ENCODE measurements at regions of chr18 and their contacts with region 1.

Region 1: GRCh38 chr18:59402432-59403090 is 43.5 kb upstream of the LMAN1 start:
- DNase-seq: peak; percentile 29
- H3K4me3 ChIP-seq: no peak overlapping the region
- H3K27ac ChIP-seq: no peak overlapping the region
- H3K27me3 ChIP-seq: no peaks in the 10 kb centered on the region
- CTCF ChIP-seq: peak; percentile 97

Region 2: DNA sequence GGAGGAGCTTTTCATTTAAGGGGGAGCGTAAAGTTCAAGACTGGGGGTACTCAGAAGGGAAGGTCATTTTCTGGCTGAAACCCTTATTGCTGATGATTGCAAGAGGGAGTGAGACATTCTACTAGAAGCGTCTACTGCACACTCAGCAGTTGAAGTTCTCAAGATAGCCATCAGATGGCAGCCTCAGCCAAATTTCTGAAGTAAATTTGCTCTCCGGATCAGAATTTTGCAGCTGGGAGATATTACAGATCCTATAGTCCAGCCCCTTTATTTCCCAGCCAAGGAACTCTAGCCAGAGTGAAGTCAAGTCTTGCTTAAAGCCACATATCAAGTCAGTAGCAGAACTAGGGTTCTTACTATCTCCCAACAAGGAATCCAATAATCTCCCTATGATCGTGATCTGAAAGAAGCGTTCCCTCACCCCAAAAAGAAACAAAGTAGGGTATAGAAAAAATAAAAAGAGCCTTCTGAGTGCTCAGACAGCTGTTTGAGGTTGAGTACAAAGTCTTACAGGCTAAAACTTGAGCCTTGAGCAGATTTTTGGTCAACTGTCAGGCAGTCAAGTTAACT is 153.3 kb before region 1 on chr18:
- CTCF ChIA-PET with region 1: interaction called, 189 read pairs
- POLR2A ChIA-PET with region 1: no interaction called
- DNase-seq: peak; percentile 65
- H3K4me3 ChIP-seq: no peak overlapping the region
- H3K27ac ChIP-seq: no peak overlapping the region
- H3K27me3 ChIP-seq: peaks cover 13% of the 10 kb centered on the region
- CTCF ChIP-seq: peak; percentile 88

Region 3: GRCh38 chr18:59353079-59353680 is 49.4 kb before region 1 on chr18:
- CTCF ChIA-PET with region 1: interaction called, 31 read pairs
- POLR2A ChIA-PET with region 1: no interaction called
- DNase-seq: no peak
- H3K4me3 ChIP-seq: no peak overlapping the region
- H3K27ac ChIP-seq: no peak overlapping the region
- H3K27me3 ChIP-seq: no peaks in the 10 kb centered on the region
- CTCF ChIP-seq: no peak

Region 4: DNA sequence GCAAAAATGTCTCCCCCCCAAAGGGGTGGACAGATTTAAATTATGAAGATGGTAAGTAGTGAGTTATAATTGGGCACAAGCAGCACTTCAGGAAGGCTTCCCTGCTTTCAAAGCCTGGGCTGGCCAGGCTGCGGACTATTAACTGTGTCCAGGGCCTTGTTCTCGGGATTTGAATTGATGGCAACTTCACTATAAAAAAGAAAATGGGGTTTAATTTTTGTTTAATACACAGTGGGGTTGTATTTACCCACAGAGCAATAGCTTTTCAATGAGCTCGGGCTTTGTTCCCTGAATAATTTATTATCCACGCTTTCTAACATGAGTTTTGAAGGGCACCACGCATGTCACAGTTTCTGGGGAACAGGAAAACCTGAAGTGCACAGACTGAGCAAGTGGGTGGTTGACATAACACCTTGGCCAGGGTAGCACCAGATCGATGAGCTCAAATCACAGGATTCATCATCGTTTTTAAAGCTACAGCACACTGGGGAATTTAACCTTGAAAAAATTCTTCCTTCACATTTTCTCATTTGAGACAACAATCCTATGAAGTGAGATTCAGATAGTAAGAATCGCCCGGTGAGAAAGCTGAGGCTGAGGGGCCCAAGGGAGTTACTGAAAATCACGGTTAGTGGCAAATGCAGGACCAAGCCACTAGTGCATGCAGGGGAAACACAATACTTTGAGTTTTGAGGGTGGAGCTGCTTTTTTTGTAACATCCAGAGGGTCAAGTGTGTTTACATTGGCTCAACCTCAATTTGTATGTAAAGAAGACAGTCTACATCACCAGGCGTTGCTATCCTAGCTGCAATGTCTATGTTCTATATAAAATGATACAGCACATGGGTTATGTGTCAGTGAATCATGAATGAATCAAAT is 14.6 kb before region 1 on chr18:
- CTCF ChIA-PET with region 1: interaction called, 23 read pairs
- POLR2A ChIA-PET with region 1: no interaction called
- DNase-seq: no peak
- H3K4me3 ChIP-seq: no peak overlapping the region
- H3K27ac ChIP-seq: no peak overlapping the region
- H3K27me3 ChIP-seq: peaks cover 4% of the 10 kb centered on the region
- CTCF ChIP-seq: no peak

Region 5: GRCh38 chr18:59419386-59419785 is 16.8 kb after region 1 on chr18:
- CTCF ChIA-PET with region 1: interaction called, 18 read pairs
- POLR2A ChIA-PET with region 1: no interaction called
- DNase-seq: peak; percentile 15
- H3K4me3 ChIP-seq: no peak overlapping the region
- H3K27ac ChIP-seq: no peak overlapping the region
- H3K27me3 ChIP-seq: peaks cover 8% of the 10 kb centered on the region
- CTCF ChIP-seq: no peak

Region 6: DNA sequence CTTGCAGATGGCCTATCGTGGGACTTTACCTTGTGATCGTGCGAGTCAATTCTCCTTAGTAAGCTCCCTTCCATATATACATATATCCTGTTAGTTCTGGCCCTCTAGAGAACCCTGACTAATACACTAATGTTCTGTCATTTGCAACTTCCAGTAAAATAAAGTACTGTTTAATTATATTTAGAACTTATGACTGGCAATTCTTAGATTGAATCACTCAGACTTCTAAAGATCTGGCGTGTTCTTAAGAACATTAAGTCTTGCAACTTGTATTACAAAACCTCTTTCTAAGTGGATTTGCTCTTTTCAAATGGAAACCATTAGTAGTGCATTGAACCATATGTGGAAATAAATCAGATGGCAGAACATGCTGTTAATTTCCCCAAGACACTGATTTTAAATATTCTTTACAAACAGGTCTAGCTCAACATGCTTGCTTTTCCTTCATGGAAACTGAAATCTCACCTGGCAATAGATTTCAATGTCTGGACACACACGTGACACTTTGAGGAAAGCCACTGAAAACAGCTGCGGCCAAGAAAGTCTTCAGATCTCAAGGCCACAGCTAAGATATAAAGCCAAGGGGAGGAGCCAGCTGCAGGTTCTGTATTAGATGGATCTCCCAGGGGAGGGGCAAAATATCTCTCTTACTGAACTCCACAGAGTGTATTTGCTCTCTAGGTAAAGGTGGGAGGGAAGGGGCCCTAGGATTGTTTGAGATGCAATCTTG is 547.8 kb after region 1 on chr18:
- CTCF ChIA-PET with region 1: no interaction called
- POLR2A ChIA-PET with region 1: no interaction called
- DNase-seq: no peak
- H3K4me3 ChIP-seq: no peak overlapping the region
- H3K27ac ChIP-seq: no peak overlapping the region
- H3K27me3 ChIP-seq: no peaks in the 10 kb centered on the region
- CTCF ChIP-seq: no peak

Region 7: DNA sequence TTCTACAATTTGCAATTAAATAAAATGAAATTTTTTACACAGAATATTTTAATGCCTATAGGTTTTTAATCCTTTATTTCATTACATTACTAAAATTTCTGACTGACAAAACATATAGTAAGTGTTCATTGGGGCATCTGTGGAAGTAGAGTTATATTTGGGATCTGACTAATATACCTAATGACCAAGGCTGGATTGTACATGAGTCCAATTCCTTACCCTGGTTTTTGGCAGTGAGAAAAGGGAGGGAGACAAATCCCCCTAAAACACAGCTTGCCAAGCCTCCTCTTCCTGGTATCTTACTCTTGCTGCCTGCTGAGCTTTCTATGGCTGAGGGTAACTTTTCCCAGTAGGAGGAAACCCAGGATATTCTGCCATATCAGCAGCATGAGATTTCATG is 1781.2 kb after region 1 on chr18:
- CTCF ChIA-PET with region 1: no interaction called
- POLR2A ChIA-PET with region 1: no interaction called
- DNase-seq: no peak
- H3K4me3 ChIP-seq: no peak overlapping the region
- H3K27ac ChIP-seq: no peak overlapping the region
- H3K27me3 ChIP-seq: no peaks in the 10 kb centered on the region
- CTCF ChIP-seq: no peak

Measured in AG04450 (cell line).